ENCODE measurements at regions of chr11 and their contacts with region 1.

Region 1: DNA sequence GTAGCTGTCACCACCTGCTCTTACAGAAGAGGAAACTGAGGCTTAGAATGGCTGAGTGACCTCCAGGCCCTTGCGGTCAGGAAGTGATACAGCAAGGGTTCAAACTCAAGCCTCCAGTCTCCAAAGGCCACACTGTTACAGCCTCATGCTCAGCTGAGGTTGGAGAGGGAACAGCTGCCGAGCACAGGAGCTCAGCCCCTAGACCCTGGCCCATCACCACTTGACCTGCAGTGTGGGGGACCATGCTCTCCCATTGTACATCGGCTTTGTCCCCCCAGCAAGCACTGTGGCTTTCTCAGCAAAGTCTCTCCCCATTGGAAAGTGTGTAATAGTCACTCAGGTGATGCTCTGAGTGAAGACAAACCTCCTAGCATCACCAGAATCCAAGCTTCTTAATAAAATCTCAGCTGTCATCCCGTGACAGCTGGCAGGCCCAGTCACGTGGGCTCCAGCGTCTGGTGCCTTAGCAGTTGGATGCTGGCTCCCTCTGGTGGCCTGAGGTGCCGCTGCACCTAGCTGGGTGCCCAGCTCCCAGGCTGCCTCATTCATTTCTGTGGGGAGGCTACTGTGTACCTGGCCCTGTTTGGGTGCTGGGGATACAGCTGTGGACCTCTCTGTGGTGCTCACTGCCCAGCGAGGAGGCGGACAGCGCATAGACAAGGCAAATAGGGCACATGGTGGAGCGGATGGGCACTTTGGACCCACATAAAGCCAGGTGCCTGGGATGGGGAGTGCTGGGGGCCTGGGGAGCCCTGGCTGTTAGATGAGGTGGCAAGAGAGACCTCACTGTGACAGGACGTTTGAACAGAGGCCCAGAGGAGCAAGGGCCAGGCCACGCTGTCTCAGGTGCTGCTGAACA is 19.1 kb upstream of the MYRF start:
- DNase-seq: peak; percentile 71 to 85
- H3K4me3 ChIP-seq: no peak overlapping the region
- H3K27ac ChIP-seq: no peak overlapping the region
- H3K4me1 ChIP-seq: peaks cover 35% of the 10 kb centered on the region
- H3K27me3 ChIP-seq: no peaks in the 10 kb centered on the region
- CTCF ChIP-seq: peak; percentile 98

Region 2: DNA sequence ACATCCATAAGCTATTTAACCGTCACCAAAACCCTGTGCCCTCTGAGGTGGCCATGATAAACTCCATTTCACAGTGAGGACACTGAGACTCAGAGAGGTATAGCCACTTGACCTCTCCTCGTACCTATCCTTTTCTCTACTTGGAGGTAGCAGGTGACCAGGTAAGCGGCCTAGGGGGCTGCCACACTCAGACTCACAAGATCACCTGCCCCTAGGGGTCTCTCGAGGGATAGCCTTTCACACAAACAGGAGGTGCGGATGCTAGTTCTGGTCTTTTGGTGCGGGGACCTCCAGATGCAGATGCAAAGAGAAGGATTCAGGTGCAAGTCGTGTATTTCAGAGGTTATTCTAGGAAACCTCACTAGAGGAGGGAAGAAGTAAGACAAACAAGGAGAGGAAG is 994.2 kb before region 1 on chr11:
- CTCF ChIA-PET with region 1: no interaction called
- POLR2A ChIA-PET with region 1: no interaction called
- intact Hi-C with region 1: no loop called
- DNase-seq: peak in 1 of 2 experiments; percentile 20
- H3K4me3 ChIP-seq: no peak overlapping the region
- H3K27ac ChIP-seq: no peak overlapping the region
- H3K4me1 ChIP-seq: no peaks in the 10 kb centered on the region
- H3K27me3 ChIP-seq: peaks cover 58% of the 10 kb centered on the region
- CTCF ChIP-seq: no peak; the same call in 1 of the 2 replicates

Region 3: DNA sequence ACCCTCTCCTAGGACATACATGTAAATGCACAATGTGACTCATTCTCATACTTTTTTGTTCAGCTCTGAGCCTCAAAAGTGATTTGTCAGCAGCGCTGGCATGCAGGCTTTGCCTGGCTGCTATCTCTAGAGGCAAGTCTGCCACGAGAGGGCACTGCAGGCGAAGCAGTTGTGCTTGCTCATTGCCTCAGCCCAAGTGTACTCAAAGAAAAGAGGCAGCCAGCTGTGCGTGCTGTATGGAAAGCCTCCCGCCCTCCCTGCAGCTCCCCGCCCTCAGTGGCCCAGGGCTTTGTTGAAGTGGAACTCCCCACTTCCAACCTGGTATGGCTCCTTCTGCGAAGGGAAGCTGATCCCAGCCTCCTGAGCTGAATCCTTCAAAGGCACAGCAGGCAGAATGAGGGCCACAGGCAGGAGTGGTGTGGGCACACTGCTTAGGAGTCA is 287.1 kb before region 1 on chr11:
- CTCF ChIA-PET with region 1: no interaction called
- POLR2A ChIA-PET with region 1: no interaction called
- intact Hi-C with region 1: loop called (anchors 1 kb)
- DNase-seq: peak; percentile 82 to 90
- H3K4me3 ChIP-seq: no peak overlapping the region
- H3K27ac ChIP-seq: no peak overlapping the region
- H3K4me1 ChIP-seq: no peaks in the 10 kb centered on the region
- H3K27me3 ChIP-seq: no peaks in the 10 kb centered on the region
- CTCF ChIP-seq: peak; percentile 91

Region 4: GRCh38 chr11:61532139-61533038 is 201.0 kb before region 1 on chr11:
- CTCF ChIA-PET with region 1: no interaction called
- POLR2A ChIA-PET with region 1: no interaction called
- intact Hi-C with region 1: loop called (anchors 1 kb)
- DNase-seq: peak in 1 of 2 experiments; percentile 69
- H3K4me3 ChIP-seq: no peak overlapping the region
- H3K27ac ChIP-seq: no peak overlapping the region
- H3K4me1 ChIP-seq: no peaks in the 10 kb centered on the region
- H3K27me3 ChIP-seq: peaks cover 22% of the 10 kb centered on the region; the same call in 1 of the 2 replicates
- CTCF ChIP-seq: peak; percentile 94

Region 5: GRCh38 chr11:61598886-61599868 is 134.2 kb before region 1 on chr11:
- CTCF ChIA-PET with region 1: no interaction called
- POLR2A ChIA-PET with region 1: interaction called, 12 read pairs
- intact Hi-C with region 1: no loop called
- DNase-seq: no peak
- H3K4me3 ChIP-seq: no peak overlapping the region
- H3K27ac ChIP-seq: no peak overlapping the region
- H3K4me1 ChIP-seq: peaks cover 25% of the 10 kb centered on the region
- H3K27me3 ChIP-seq: no peaks in the 10 kb centered on the region
- CTCF ChIP-seq: no peak

Region 6: DNA sequence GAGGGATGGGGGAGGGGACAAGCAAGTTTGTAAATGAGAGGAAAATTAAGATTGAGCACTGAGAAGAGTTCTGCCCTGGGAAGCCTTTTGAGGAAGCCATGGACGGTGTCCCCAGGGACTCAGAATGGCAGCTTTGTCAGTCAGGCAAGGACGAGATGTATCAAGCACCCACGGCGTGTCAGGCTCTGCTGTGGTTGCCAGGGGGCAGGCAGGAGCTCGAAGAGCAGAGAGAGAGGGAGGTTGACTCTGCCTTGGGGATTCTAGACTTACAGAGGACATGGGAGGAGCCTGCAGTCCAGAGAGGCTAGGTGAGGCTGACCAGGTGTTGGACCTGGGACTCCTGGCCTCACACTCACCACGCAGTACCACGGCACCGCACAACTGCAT is 123.4 kb before region 1 on chr11:
- CTCF ChIA-PET with region 1: no interaction called
- POLR2A ChIA-PET with region 1: no interaction called
- intact Hi-C with region 1: no loop called
- DNase-seq: no peak
- H3K4me3 ChIP-seq: no peak overlapping the region
- H3K27ac ChIP-seq: no peak overlapping the region
- H3K4me1 ChIP-seq: peaks cover 15% of the 10 kb centered on the region; the same call in 1 of the 2 replicates
- H3K27me3 ChIP-seq: 0 out of 2 replicates have a peak, but pooled peaks cover 11% of the 10 kb centered on the region
- CTCF ChIP-seq: peak; percentile 37; the same call in 1 of the 2 replicates

Region 7: DNA sequence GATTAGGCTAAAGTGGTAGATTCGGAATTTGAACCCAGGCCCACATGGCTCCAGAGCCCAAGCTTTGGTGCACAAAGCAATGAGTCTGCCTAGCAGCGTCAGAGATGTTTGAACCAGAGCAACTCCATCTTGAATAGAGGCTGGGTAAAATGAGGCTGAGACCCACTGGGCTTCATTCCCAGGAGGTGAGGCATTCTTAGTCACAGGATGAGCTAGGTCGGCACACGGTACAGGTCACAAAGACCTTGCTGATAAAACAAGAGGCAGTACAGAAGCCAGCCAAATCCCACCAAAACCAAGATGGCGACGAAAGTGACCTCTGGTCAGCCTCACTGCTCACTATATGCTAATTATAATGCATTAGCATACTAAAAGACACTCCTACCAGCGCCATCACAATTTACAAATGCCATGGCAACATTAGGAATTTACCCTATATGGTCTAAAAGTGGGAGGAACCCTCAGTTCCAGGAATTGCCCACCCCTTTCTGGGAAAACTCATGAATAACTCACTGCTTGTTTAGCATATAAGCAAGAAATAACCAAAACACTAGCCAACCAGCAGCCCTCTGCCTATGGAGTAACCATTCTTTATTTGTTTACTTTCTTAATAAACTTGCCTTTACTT is 93.4 kb before region 1 on chr11:
- CTCF ChIA-PET with region 1: interaction called, 18 read pairs
- POLR2A ChIA-PET with region 1: no interaction called
- intact Hi-C with region 1: loop called (anchors 1 kb)
- DNase-seq: no peak
- H3K4me3 ChIP-seq: no peak overlapping the region
- H3K27ac ChIP-seq: no peak overlapping the region
- H3K4me1 ChIP-seq: no peaks in the 10 kb centered on the region
- H3K27me3 ChIP-seq: no peaks in the 10 kb centered on the region
- CTCF ChIP-seq: no peak

Region 8: DNA sequence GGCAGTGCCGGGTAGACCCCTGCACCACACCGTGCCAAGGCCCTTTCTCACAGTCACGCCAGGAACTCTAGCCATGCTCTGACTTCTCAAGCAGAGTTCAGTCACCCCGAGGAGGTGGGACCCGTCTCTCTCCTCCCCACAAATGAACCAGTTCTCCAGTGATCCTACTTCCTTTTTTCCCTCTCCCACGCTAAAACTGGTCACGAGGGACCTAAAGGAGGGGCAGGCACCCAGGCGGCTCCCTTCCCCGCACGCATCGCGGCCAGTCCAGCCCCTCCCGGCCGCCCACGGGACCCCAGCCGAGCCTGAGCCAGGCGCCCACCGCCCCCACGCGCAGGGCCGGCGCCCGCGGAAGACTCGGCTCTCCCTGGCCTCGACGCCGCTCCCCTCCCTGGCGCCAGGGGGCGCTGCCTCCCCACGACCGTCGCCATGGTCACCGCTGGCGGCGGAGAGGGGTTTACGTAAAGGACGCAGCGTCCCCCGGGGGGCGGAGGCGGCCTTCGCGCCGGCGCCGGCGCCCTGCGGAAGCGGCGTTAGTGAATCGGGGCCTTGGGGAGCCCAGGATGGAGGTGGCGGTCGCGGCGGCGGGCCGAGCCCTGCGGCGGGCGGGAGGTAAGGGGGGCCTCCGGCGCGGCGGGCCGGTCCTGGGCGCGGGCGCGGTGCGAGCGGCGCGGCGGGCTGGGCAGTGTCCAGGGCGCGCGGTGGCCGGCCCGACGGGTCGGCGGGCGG is 53.3 kb before region 1 on chr11 and contains the start of gene DAGLA:
- CTCF ChIA-PET with region 1: interaction called, 6 read pairs
- POLR2A ChIA-PET with region 1: no interaction called
- intact Hi-C with region 1: loop called (anchors 1 kb)
- DNase-seq: peak; percentile 48 to 75
- H3K4me3 ChIP-seq: peak within 1 kb of the TSS; percentile 72
- H3K27ac ChIP-seq: no peak within 1 kb of the TSS
- H3K4me1 ChIP-seq: peaks cover 14% of the 10 kb centered on the region; the same call in 1 of the 2 replicates
- H3K27me3 ChIP-seq: peaks cover 22% of the 10 kb centered on the region
- CTCF ChIP-seq: peak; percentile 93
- total RNA-seq, gene DAGLA: 8.3 and 10.1 TPM in 2 replicates

Region 9: GRCh38 chr11:61695917-61696316 is 37.4 kb before region 1 on chr11:
- CTCF ChIA-PET with region 1: interaction called, 7 read pairs
- POLR2A ChIA-PET with region 1: interaction called, 16 read pairs
- intact Hi-C with region 1: loop called (anchors 1 kb)
- DNase-seq: peak; percentile 91 to 94
- H3K4me3 ChIP-seq: peak overlapping the region; percentile 34; the same call in 1 of the 2 replicates
- H3K27ac ChIP-seq: peak overlapping the region; percentile 96
- H3K4me1 ChIP-seq: peaks cover 73% of the 10 kb centered on the region
- H3K27me3 ChIP-seq: no peaks in the 10 kb centered on the region
- CTCF ChIP-seq: no peak

Region 10: DNA sequence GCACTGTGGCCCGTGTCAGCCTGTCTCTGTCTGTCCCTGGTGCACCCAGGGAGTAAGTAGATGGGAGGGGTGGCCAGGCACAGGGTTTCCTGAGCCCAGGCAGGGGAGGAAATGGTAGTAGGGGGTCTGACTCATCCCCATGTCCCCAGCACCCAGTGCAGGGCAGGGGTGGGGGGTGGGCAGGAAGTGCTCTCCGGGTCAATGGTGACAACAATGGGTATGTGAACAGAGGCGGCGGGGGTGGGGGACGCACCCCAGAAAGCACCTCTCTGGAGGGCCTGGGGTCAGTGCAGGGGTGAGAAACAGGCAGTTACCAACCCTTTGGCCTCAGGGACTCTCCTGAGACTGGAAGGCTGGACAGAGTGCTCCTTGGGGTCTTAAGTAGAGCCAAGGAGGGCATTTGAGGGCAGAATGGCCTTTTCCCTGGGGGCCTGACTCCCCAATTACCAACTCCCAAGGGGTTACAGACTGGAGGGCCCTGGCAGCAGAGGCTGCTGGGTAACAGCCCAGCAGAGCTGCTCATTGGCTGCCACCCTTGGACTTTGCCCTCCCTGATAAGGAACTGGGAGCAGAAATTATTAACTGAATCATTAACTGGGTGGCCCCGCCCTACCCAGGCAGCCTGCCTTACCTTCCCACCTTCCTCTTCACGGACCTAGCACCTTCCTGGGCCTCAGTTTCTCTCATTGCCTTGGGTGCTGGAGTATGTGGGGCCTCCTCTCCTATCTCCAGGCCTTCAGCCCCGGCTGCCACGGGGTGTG is 23.3 kb after region 1 on chr11:
- CTCF ChIA-PET with region 1: no interaction called
- POLR2A ChIA-PET with region 1: no interaction called
- intact Hi-C with region 1: no loop called
- DNase-seq: peak; percentile 42 to 79
- H3K4me3 ChIP-seq: no peak overlapping the region; the same call in 1 of the 2 replicates
- H3K27ac ChIP-seq: peak overlapping the region; percentile 68
- H3K4me1 ChIP-seq: peaks cover 22% of the 10 kb centered on the region
- H3K27me3 ChIP-seq: no peaks in the 10 kb centered on the region
- CTCF ChIP-seq: no peak

Region 11: GRCh38 chr11:61860054-61860903 is 126.9 kb after region 1 on chr11:
- CTCF ChIA-PET with region 1: no interaction called
- POLR2A ChIA-PET with region 1: no interaction called
- intact Hi-C with region 1: no loop called
- DNase-seq: peak in 1 of 2 experiments; percentile 46
- H3K4me3 ChIP-seq: no peak overlapping the region
- H3K27ac ChIP-seq: no peak overlapping the region
- H3K4me1 ChIP-seq: no peaks in the 10 kb centered on the region
- H3K27me3 ChIP-seq: no peaks in the 10 kb centered on the region
- CTCF ChIP-seq: no peak

Measured in PC-9 (cell line).